ENCODE measurements at regions of chr11 and their contacts with region 1.

Region 1: DNA sequence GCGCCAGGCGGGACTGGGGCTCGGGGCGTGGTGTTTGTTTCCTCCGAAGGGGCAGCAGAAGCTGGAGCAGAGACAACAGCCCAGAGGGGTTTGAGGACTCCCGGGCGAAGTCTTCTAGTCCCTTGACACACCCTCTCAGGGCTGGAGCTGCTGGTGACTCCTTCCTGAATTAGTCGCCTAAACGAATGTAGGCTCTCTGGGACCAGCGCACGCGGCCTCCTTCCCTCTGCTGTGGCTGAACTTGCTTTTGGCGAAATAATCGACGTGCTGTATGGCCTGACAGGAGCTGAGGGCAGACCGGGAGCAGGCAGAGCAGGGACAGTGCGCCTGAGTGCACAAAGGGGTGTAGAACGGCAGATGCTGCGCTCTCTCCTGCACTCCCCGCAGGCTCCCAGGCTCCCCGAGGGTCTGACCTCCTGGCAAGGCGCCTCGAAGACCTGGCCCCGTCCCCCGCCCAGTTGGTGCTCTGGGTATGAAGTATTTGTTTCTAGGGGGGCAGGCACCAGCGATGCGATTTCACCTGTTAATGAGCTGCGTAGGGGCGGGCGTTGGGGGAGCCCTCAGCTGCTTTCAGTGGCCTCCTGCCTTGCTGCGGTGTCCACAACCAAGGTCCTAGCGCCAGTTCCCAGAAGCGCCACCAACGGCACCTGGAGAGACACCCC is 5.3 kb downstream of the SLC17A6 start:
- DNase-seq: no peak
- H3K4me3 Mint-ChIP-seq: no peak overlapping the region
- H3K27ac Mint-ChIP-seq: no peak overlapping the region
- H3K4me1 Mint-ChIP-seq: no peaks in the 10 kb centered on the region
- H3K27me3 Mint-ChIP-seq: peaks cover 69% of the 10 kb centered on the region

Region 2: GRCh38 chr11:22371160-22371559 is 27.7 kb after region 1 on chr11:
- intact Hi-C with region 1: no loop called
- DNase-seq: no peak
- H3K4me3 Mint-ChIP-seq: no peak overlapping the region
- H3K27ac Mint-ChIP-seq: no peak overlapping the region
- H3K4me1 Mint-ChIP-seq: no peaks in the 10 kb centered on the region
- H3K27me3 Mint-ChIP-seq: no peaks in the 10 kb centered on the region

Region 3: GRCh38 chr11:22432291-22433093 is 89.0 kb after region 1 on chr11:
- intact Hi-C with region 1: loop called (anchors 5 kb)
- DNase-seq: no peak
- H3K4me3 Mint-ChIP-seq: no peak overlapping the region
- H3K27ac Mint-ChIP-seq: no peak overlapping the region
- H3K4me1 Mint-ChIP-seq: no peaks in the 10 kb centered on the region
- H3K27me3 Mint-ChIP-seq: peaks cover 19% of the 10 kb centered on the region